HepG2 (cell line): ENCODE measurements at regions of chr6 and their contacts with region 1.

Region 1: DNA sequence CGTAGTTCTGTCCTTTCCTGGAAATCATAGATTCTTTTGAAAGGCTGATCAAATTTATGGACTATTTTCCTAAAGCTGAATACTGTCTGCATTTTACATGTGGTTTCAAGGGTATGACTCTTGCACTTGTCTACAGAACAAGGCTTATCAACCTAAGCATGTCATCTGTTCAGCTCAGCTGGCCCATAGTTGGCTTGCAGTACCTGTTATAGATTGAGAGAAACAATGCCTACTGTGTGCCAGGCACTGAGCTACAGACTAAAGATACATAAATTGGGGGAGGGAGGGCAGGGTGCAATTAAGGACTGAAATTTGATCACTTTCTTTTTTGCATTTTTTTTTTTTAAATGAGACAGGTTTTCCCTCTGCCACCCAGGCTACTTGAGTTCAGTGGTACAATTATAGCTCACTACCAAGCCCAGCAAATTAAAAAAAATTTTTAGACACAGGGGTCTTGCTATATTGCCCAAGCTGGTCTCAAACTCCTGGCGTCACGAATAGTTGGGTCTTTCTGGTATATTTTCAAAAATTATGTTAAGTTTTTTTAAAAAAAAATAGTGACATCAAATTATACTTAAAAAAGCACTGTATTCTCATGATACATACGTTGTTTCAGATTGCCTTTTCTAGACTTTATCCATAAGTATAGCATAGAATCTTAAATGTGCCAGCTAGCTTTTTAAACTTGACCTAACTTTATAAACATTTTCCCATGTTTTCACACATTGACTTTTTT is 52.2 kb downstream of the RREB1 start:
- DNase-seq: peak; percentile 38
- ATAC-seq: peak; percentile 18
- H3K4me3 ChIP-seq: no peak overlapping the region
- H3K27ac ChIP-seq: peak overlapping the region; percentile 88
- H3K4me1 ChIP-seq: peaks cover 100% of the 10 kb centered on the region
- H3K27me3 ChIP-seq: no peaks in the 10 kb centered on the region
- CTCF ChIP-seq: no peak
- EP300 ChIP-seq: no peak
- POLR2A ChIP-seq: no peak
- RAD21 ChIP-seq: no peak

Region 2: GRCh38 chr6:7129784-7130569 is 30.0 kb before region 1 on chr6:
- CTCF ChIA-PET with region 1: no interaction called
- POLR2A ChIA-PET with region 1: no interaction called
- in situ Hi-C with region 1: no loop called
- intact Hi-C with region 1: no loop called
- DNase-seq: peak; percentile 71
- ATAC-seq: peak; percentile 73
- H3K4me3 ChIP-seq: no peak overlapping the region
- H3K27ac ChIP-seq: peak overlapping the region; percentile 47
- H3K4me1 ChIP-seq: peaks cover 94% of the 10 kb centered on the region
- H3K27me3 ChIP-seq: no peaks in the 10 kb centered on the region
- CTCF ChIP-seq: no peak
- EP300 ChIP-seq: 0 out of 4 replicates have a peak, but pooled peaks of 1 of the 2 experiments have one; percentile 14
- POLR2A ChIP-seq: no peak
- RAD21 ChIP-seq: no peak

Region 3: GRCh38 chr6:7145885-7146828 is 13.8 kb before region 1 on chr6:
- CTCF ChIA-PET with region 1: no interaction called
- POLR2A ChIA-PET with region 1: interaction called, 5 read pairs
- in situ Hi-C with region 1: no loop called
- intact Hi-C with region 1: loop called (anchors 1 kb)
- DNase-seq: peak; percentile 84
- ATAC-seq: peak; percentile 77
- H3K4me3 ChIP-seq: peak overlapping the region in 1 of 3 experiments; percentile 32; a peak in 2 of 6 replicates
- H3K27ac ChIP-seq: peak overlapping the region; percentile 66
- H3K4me1 ChIP-seq: peaks cover 100% of the 10 kb centered on the region
- H3K27me3 ChIP-seq: no peaks in the 10 kb centered on the region
- CTCF ChIP-seq: no peak
- EP300 ChIP-seq: no peak
- POLR2A ChIP-seq: no peak
- RAD21 ChIP-seq: no peak